Heart left ventricle (tissue), 16 donors: ENCODE measurements at regions of chr16 and their contacts with region 1.

Region 1: DNA sequence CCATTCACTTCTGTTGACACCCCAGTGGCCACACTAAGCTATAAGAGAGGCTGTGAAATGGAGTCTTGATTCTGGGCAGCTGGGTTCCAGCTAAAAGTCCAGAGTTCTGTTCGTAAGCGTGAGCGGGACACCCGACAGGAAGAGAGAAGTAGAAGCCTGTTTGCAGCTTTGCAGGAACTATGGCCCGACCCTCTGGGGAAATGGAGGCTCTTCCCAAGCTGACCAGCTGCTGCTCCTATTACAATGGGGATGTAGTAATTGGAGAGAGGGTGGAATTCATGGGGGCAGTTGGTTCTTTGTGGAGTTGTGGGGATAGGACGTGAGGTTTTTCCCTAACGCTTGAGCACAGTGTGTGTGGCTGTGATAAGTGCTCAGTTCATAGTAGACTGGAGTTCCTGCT is 28.4 kb downstream of the UBALD1 start:
- DNase-seq: no peak
- ATAC-seq: no peak
- H3K4me3 ChIP-seq: no peak overlapping the region
- H3K27ac ChIP-seq: no peak overlapping the region
- H3K4me1 ChIP-seq: no peaks in the 10 kb centered on the region
- H3K27me3 ChIP-seq: no peaks in the 10 kb centered on the region
- CTCF ChIP-seq: no peak
- POLR2A ChIP-seq: no peak

Region 2: GRCh38 chr16:4506450-4506849 is 79.8 kb before region 1 on chr16:
- intact Hi-C with region 1: loop called in 8 of 10 experiments (anchors 2 to 10 kb)
- DNase-seq: peak in 4 of 5 donors; percentile 57 to 66 (median 61)
- ATAC-seq: peak; percentile 69 to 77 (median 70)
- H3K4me3 ChIP-seq: no peak overlapping the region
- H3K27ac ChIP-seq: peak overlapping the region in 3 of 12 donors; percentile 21 to 84 (median 38)
- H3K4me1 ChIP-seq: peaks cover 0 to 51% (median 26%) of the 10 kb centered on the region in 12 donors
- H3K27me3 ChIP-seq: no peaks in the 10 kb centered on the region
- CTCF ChIP-seq: peak; percentile 71 to 87 (median 80)
- POLR2A ChIP-seq: no peak

Region 3: DNA sequence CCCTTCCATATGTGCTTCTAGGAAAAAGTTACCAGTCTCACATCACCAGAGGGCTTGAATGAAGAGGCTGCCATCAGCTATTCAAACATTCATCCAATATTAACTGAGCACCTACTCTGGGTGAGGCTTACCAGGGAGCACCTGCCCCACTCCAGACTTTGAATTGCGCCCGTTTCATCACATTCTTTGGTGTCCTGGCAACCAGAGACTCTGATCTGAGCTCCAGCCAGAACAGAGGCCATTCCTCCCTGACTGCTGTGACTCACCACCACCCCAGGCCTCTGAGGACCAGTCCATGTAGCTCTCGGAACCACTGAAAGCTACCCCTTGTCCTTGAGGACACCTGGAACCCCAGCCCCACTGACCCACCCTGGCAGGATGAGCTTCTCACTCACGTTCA is 30.2 kb before region 1 on chr16 and contains the start of gene C16orf96:
- intact Hi-C with region 1: no loop called
- DNase-seq: no peak
- ATAC-seq: peak in 1 of 4 donors; percentile 34
- H3K4me3 ChIP-seq: no peak within 1 kb of the TSS
- H3K27ac ChIP-seq: no peak within 1 kb of the TSS
- H3K4me1 ChIP-seq: no peaks in the 10 kb centered on the region
- H3K27me3 ChIP-seq: no peaks in the 10 kb centered on the region
- CTCF ChIP-seq: no peak
- POLR2A ChIP-seq: no peak
- total RNA-seq, gene C16orf96: 0.05 to 0.19 (median 0.15) TPM in 7 of 9 donors, not detected in the others

Region 4: GRCh38 chr16:4693296-4693955 is 107.1 kb after region 1 on chr16 and contains the start of gene NUDT16L1:
- intact Hi-C with region 1: no loop called
- DNase-seq: peak; percentile 97 to 99 (median 98)
- ATAC-seq: peak; percentile 86 to 95 (median 90)
- H3K4me3 ChIP-seq: peak within 1 kb of the TSS; percentile 72 to 100 (median 96)
- H3K27ac ChIP-seq: peak within 1 kb of the TSS; percentile 61 to 96 (median 88)
- H3K4me1 ChIP-seq: peaks cover 5 to 46% (median 26%) of the 10 kb centered on the region in 12 donors
- H3K27me3 ChIP-seq: no peaks in the 10 kb centered on the region
- CTCF ChIP-seq: peak in 10 of 12 donors; percentile 13 to 62 (median 40)
- POLR2A ChIP-seq: peak; percentile 13 to 80
- total RNA-seq, gene NUDT16L1: 33.1 to 65.2 (median 46.4) TPM